ENCODE measurements at regions of chr2 and their contacts with region 1.

Region 1: GRCh38 chr2:161223139-161223732 is 63.0 kb downstream of the TANK start:
- DNase-seq: no peak
- H3K4me3 Mint-ChIP-seq: no peak overlapping the region
- H3K27ac Mint-ChIP-seq: no peak overlapping the region
- H3K4me1 Mint-ChIP-seq: no peaks in the 10 kb centered on the region
- H3K27me3 Mint-ChIP-seq: no peaks in the 10 kb centered on the region

Region 2: DNA sequence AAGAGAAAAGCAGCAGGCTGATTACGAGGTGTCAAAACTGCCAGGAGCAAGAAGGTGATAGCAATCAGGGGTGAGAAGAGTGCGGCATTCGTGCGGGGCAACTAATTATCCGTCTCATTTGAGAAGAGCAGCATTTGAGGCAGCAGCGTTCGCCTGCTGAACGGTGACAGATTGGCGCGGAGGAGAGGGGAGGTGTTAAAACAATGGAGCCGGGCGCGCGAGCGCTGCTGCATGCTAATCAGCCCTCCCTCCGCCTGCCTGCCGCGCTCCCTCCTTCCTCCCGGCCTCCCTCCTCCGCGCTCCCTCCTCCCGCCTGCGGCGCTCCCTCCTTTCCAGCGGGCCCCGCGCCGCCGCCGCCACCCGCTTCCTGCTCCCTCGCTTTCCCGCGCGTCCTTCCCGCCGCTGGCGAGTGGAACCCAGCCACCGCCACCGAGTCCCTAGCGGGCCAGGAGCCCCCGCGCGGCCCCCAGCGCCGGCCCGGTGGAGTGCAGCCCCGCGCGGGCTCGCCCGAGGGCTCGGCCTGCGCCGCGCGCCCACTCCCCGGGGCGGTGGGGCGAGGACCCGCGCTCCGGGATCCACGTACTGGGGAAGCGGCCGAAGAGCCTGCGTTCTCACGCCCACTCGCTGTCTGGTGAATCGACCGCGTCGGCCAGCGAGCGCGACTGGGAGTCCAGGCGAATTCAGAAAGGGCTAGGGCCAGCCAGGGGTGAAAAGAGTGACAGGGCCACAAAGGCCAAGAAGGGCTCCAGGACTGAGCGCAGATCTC is 15.5 kb after region 1 on chr2:
- CTCF ChIA-PET with region 1: interaction called, 30 read pairs
- POLR2A ChIA-PET with region 1: no interaction called
- intact Hi-C with region 1: no loop called
- DNase-seq: peak; percentile 71
- H3K4me3 Mint-ChIP-seq: peak overlapping the region; percentile 83
- H3K27ac Mint-ChIP-seq: peak overlapping the region; percentile 65
- H3K4me1 Mint-ChIP-seq: peaks cover 52% of the 10 kb centered on the region
- H3K27me3 Mint-ChIP-seq: no peaks in the 10 kb centered on the region

Region 3: DNA sequence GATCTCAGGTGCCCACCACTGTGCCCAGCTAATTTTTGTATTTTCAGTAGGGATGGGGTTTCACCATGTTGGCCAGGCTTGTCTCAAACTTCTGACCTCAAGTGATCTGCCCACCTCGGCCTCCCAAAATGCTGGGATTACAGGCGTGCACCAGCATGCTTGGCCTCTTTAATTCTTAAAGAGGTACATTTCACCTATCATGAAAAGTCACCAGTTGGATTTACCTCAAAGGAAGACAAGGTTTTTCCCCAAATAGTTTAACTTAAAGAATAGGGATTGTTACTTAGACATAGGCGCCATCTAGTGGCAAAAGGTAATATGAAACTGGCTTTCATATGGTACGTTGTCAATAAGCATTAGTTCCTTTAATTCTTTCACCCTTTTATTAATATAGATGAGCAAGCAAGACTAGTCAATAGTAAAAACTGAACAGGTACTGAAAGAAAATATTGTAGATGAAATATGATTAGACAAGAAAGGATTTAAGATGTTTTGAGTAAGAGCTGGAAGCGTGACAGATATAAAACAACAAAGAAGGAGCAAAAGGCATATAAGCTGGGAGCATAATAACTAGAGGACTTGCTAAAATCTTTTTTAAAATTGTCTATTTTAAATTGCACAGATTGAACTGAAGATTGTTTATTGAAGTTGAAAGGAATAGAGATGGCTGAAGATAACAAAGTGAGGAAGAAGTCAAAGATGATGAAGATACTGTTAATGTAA is 50.0 kb after region 1 on chr2:
- CTCF ChIA-PET with region 1: interaction called, 56 read pairs
- POLR2A ChIA-PET with region 1: no interaction called
- intact Hi-C with region 1: loop called (anchors 1 kb)
- DNase-seq: no peak
- H3K4me3 Mint-ChIP-seq: no peak overlapping the region
- H3K27ac Mint-ChIP-seq: no peak overlapping the region
- H3K4me1 Mint-ChIP-seq: no peaks in the 10 kb centered on the region
- H3K27me3 Mint-ChIP-seq: no peaks in the 10 kb centered on the region